SK-N-SH (cell line): ENCODE measurements at regions of chr1 and their contacts with region 1.

Region 1: DNA sequence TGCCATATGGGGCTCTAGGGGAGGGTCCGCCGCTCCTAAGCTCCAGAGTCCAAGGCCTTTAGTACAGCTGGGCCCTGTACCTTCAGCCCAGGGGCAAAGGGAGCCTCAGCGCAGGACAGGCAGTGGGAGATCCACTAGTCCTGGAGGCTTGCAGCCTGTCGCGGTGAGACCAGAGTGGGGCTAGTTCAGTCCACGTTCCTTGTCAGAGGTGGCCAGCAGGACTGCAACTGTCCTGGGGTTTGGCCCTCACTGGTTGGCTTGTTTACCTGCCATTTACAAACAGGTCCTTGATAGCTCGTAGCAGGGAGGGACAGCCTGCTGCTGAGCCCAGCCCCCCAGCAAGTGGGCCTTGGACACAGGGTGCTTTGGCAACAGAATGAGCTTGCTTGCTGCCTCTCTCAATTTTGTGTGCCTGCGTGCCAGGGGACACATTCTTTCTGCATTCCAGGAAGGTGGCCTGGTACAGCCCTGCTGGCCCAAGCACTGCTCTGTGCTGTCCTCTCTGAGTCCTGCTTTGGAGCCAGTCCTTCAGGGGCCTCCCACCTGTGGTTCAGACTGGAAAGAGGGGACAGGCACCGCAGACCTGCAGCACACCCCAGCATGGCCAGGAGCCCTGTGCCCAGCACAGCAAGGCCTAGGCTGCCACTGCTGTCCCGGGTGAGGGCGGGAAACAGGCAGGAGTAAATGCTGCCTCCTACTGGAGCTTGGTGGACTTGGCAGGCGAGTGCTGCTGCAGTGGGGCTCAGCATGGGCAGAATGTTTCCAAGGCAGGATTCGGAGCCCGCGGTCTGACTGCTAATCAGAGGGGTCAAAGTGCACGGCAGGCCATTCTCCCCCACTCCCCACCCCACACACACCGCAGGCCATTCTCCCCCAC is 15.2 kb downstream of the H6PD start:
- DNase-seq: peak; percentile 76
- H3K4me3 ChIP-seq: no peak overlapping the region
- H3K27ac ChIP-seq: no peak overlapping the region
- H3K4me1 ChIP-seq: peaks cover 7 to 37% of the 10 kb centered on the region in 2 experiments; a peak in 3 of 4 replicates
- H3K27me3 ChIP-seq: no peaks in the 10 kb centered on the region
- CTCF ChIP-seq: peak; percentile 55
- EP300 ChIP-seq: no peak
- RAD21 ChIP-seq: peak; percentile 46

Region 2: GRCh38 chr1:9234223-9235095 is 15.3 kb before region 1 on chr1 and contains the start of gene H6PD:
- CTCF ChIA-PET with region 1: interaction called, 31 read pairs
- POLR2A ChIA-PET with region 1: interaction called, 3 read pairs
- DNase-seq: peak; percentile 99
- H3K4me3 ChIP-seq: peak within 1 kb of the TSS; percentile 63 to 65
- H3K27ac ChIP-seq: peak within 1 kb of the TSS; percentile 82 to 84
- H3K4me1 ChIP-seq: peaks cover 0 to 10% of the 10 kb centered on the region in 2 experiments; a peak in 1 of 4 replicates
- H3K27me3 ChIP-seq: no peaks in the 10 kb centered on the region
- CTCF ChIP-seq: peak; percentile 63
- EP300 ChIP-seq: no peak
- RAD21 ChIP-seq: peak; percentile 38
- polyA plus RNA-seq, gene H6PD: 16.2 and 19.1 TPM in 2 replicates

Region 3: DNA sequence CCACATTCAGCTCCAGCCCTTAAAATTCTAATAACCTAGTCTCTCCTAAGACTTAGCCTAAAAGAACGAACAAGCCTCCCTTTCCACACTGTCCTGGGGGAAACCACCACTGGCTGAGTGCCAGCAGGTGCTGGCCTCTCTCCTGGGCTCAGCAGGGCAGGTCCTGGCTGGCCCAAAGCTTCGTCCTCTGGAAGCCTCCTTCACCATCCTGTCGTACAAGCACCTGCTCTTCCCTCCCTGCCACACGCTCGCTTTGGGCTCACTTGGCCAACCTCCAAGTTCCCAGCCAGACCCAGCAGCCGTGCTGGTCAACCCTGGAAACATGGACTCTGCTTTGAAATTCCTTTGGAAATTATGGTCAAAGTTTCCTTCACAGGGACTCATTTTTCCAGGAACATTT is 231.3 kb after region 1 on chr1:
- CTCF ChIA-PET with region 1: no interaction called
- POLR2A ChIA-PET with region 1: no interaction called
- DNase-seq: peak; percentile 9
- H3K4me3 ChIP-seq: no peak overlapping the region
- H3K27ac ChIP-seq: no peak overlapping the region
- H3K4me1 ChIP-seq: no peaks in the 10 kb centered on the region; a peak in 1 of 4 replicates
- H3K27me3 ChIP-seq: no peaks in the 10 kb centered on the region
- CTCF ChIP-seq: no peak
- EP300 ChIP-seq: no peak
- RAD21 ChIP-seq: no peak